Caco-2 (cell line): ENCODE measurements at regions of chr11 and their contacts with region 1.

Region 1: DNA sequence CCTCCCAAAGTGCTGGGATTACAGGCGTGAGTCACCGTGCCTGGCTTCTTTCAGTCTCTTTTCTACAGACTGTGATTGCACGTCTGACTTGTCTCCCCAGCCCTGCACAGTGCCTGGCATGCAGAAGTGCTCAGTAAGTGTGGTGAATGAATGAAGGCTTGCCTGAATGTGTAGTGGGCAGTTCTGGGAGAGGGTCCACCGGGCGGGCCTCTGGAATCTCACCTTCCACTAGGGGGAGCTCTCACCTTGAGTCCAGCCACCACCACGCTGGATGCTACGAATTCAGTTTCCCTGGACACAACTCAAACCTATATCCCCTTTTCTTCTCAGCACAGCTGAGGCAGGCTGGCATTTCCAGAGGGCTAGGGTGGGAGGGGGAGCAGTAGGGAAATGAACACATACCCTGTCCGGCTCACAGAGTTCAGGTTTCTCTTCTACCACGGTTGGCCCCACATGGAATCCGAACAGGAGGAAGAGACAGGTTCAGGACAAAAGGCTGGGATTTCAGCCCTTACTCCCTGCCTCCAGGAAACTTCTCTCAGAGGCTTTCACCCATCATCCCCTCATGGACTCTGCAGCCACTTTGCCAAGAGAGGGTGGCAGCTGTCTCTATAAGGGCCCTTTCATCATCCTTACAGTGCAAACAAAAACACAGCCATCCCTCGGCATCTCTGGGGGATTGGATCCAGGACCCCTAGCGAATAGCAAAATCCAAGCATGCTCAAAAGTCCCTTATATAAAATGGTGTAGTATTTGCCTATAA is 86.8 kb downstream of the NECTIN1 start:
- DNase-seq: peak in 1 of 2 experiments; percentile 59
- H3K4me3 ChIP-seq: no peak overlapping the region
- H3K4me3 Mint-ChIP-seq: no peak overlapping the region
- H3K27ac Mint-ChIP-seq: no peak overlapping the region
- H3K4me1 ChIP-seq: no peaks in the 10 kb centered on the region
- H3K4me1 Mint-ChIP-seq: no peaks in the 10 kb centered on the region
- H3K27me3 ChIP-seq: no peaks in the 10 kb centered on the region
- H3K27me3 Mint-ChIP-seq: no peaks in the 10 kb centered on the region
- CTCF ChIP-seq: peak; percentile 83 to 85

Region 2: DNA sequence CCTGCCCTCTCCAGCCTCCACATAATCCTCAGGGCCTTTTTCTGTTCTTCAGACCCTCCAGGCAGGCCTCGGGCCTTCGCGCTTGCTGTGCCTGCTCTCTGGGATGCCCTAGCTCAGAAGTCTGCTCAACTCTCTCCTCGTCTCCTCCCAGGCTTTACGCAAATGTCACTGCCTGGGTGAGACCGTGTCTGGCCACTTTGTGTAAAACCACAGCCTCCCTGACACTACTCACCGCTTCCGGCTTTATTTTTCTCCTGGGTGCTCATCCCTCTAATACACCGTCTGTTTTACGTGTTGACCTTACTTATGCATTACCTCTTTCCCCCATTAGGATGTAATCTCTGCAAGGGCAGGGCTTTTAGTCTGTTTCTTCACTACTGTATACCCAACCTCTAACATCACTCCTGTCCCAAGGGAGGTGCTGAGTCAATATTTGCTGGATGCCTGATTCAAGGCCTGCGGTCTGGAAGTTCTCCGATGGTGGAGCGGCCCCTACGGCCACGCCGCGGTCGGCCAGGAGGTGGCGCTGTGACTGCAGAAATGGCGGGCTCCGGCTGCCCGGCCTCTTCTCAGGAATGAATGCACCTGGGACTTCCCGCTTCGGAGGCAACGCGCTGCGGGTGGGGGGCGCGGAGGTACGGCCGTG is 161.0 kb before region 1 on chr11:
- CTCF ChIA-PET with region 1: no interaction called
- POLR2A ChIA-PET with region 1: no interaction called
- intact Hi-C with region 1: loop called (anchors 1 kb)
- DNase-seq: peak; percentile 93 to 99
- H3K4me3 ChIP-seq: no peak overlapping the region
- H3K4me3 Mint-ChIP-seq: no peak overlapping the region
- H3K27ac Mint-ChIP-seq: peak overlapping the region; percentile 16
- H3K4me1 ChIP-seq: peaks cover 5% of the 10 kb centered on the region; the same call in 1 of the 2 replicates
- H3K4me1 Mint-ChIP-seq: peaks cover 8% of the 10 kb centered on the region
- H3K27me3 ChIP-seq: no peaks in the 10 kb centered on the region; the same call in 1 of the 2 replicates
- H3K27me3 Mint-ChIP-seq: peaks cover 13% of the 10 kb centered on the region
- CTCF ChIP-seq: peak; percentile 99 to 100

Region 3: GRCh38 chr11:119594639-119595249 is 47.4 kb before region 1 on chr11:
- CTCF ChIA-PET with region 1: no interaction called
- POLR2A ChIA-PET with region 1: no interaction called
- intact Hi-C with region 1: no loop called
- DNase-seq: peak; percentile 62 to 68
- H3K4me3 ChIP-seq: no peak overlapping the region
- H3K4me3 Mint-ChIP-seq: no peak overlapping the region
- H3K27ac Mint-ChIP-seq: no peak overlapping the region
- H3K4me1 ChIP-seq: peaks cover 21% of the 10 kb centered on the region
- H3K4me1 Mint-ChIP-seq: peaks cover 24% of the 10 kb centered on the region
- H3K27me3 ChIP-seq: no peaks in the 10 kb centered on the region
- H3K27me3 Mint-ChIP-seq: no peaks in the 10 kb centered on the region
- CTCF ChIP-seq: no peak

Region 4: GRCh38 chr11:119709638-119710346 is 67.6 kb after region 1 on chr11:
- CTCF ChIA-PET with region 1: no interaction called
- POLR2A ChIA-PET with region 1: no interaction called
- intact Hi-C with region 1: no loop called
- DNase-seq: no peak
- H3K4me3 ChIP-seq: no peak overlapping the region
- H3K4me3 Mint-ChIP-seq: no peak overlapping the region
- H3K27ac Mint-ChIP-seq: peak overlapping the region; percentile 28
- H3K4me1 ChIP-seq: peaks cover 68% of the 10 kb centered on the region
- H3K4me1 Mint-ChIP-seq: peaks cover 81% of the 10 kb centered on the region
- H3K27me3 ChIP-seq: no peaks in the 10 kb centered on the region
- H3K27me3 Mint-ChIP-seq: no peaks in the 10 kb centered on the region
- CTCF ChIP-seq: no peak

Region 5: GRCh38 chr11:119782739-119783072 is 140.5 kb after region 1 on chr11:
- CTCF ChIA-PET with region 1: no interaction called
- POLR2A ChIA-PET with region 1: no interaction called
- intact Hi-C with region 1: no loop called
- DNase-seq: no peak
- H3K4me3 ChIP-seq: no peak overlapping the region
- H3K4me3 Mint-ChIP-seq: no peak overlapping the region
- H3K27ac Mint-ChIP-seq: no peak overlapping the region
- H3K4me1 ChIP-seq: no peaks in the 10 kb centered on the region
- H3K4me1 Mint-ChIP-seq: no peaks in the 10 kb centered on the region
- H3K27me3 ChIP-seq: no peaks in the 10 kb centered on the region; the same call in 1 of the 2 replicates
- H3K27me3 Mint-ChIP-seq: peaks cover 7% of the 10 kb centered on the region
- CTCF ChIP-seq: no peak

Region 6: GRCh38 chr11:120013325-120014270 is 371.4 kb after region 1 on chr11:
- CTCF ChIA-PET with region 1: interaction called, 3 read pairs
- POLR2A ChIA-PET with region 1: no interaction called
- intact Hi-C with region 1: loop called (anchors 1 kb)
- DNase-seq: peak; percentile 72 to 74
- H3K4me3 ChIP-seq: no peak overlapping the region
- H3K4me3 Mint-ChIP-seq: no peak overlapping the region
- H3K27ac Mint-ChIP-seq: no peak overlapping the region
- H3K4me1 ChIP-seq: peaks cover 7% of the 10 kb centered on the region
- H3K4me1 Mint-ChIP-seq: peaks cover 12% of the 10 kb centered on the region
- H3K27me3 ChIP-seq: peaks cover 3% of the 10 kb centered on the region
- H3K27me3 Mint-ChIP-seq: peaks cover 21% of the 10 kb centered on the region
- CTCF ChIP-seq: peak; percentile 89 to 96

Region 7: DNA sequence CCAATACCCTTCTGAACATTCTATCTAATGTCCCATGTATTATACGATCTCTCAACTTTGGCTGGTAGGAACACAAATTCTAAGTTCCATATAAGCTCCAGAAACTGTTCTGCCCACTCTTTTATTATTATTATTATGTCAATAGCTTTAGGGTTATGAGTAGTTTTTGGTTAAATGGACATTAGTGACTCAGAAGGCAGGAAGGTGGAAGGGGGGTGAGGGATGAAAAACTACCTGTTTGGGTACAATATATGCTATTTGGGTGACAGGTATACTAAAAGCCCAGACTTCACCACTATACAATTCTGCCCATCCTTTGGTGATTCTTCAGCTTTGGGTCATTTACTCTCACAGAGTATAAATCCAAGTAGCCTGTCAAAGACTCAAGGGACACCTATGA is 518.3 kb after region 1 on chr11:
- CTCF ChIA-PET with region 1: no interaction called
- POLR2A ChIA-PET with region 1: no interaction called
- intact Hi-C with region 1: no loop called
- DNase-seq: no peak
- H3K4me3 ChIP-seq: no peak overlapping the region
- H3K4me3 Mint-ChIP-seq: no peak overlapping the region
- H3K27ac Mint-ChIP-seq: no peak overlapping the region
- H3K4me1 ChIP-seq: no peaks in the 10 kb centered on the region
- H3K4me1 Mint-ChIP-seq: no peaks in the 10 kb centered on the region
- H3K27me3 ChIP-seq: peaks cover 2% of the 10 kb centered on the region; the same call in 1 of the 2 replicates
- H3K27me3 Mint-ChIP-seq: peaks cover 25% of the 10 kb centered on the region
- CTCF ChIP-seq: no peak